ENCODE measurements at regions of chr4 and their contacts with region 1.

Region 1: GRCh38 chr4:78775303-78776030 is 683 bp upstream of the BMP2K start:
- DNase-seq: peak in 1 of 2 experiments; percentile 70
- H3K4me3 ChIP-seq: peak overlapping the region; percentile 78
- H3K27ac ChIP-seq: peak overlapping the region; percentile 74
- H3K4me1 ChIP-seq: peaks cover 14% of the 10 kb centered on the region
- H3K27me3 ChIP-seq: no peaks in the 10 kb centered on the region
- CTCF ChIP-seq: no peak

Region 2: GRCh38 chr4:78645853-78646757 is 129.4 kb before region 1 on chr4:
- CTCF ChIA-PET with region 1: no interaction called
- POLR2A ChIA-PET with region 1: no interaction called
- intact Hi-C with region 1: loop called (anchors 2 kb)
- DNase-seq: peak; percentile 45 to 78
- H3K4me3 ChIP-seq: peak overlapping the region; percentile 48; the same call in 1 of the 2 replicates
- H3K27ac ChIP-seq: peak overlapping the region; percentile 88
- H3K4me1 ChIP-seq: peaks cover 81% of the 10 kb centered on the region
- H3K27me3 ChIP-seq: no peaks in the 10 kb centered on the region
- CTCF ChIP-seq: no peak

Region 3: DNA sequence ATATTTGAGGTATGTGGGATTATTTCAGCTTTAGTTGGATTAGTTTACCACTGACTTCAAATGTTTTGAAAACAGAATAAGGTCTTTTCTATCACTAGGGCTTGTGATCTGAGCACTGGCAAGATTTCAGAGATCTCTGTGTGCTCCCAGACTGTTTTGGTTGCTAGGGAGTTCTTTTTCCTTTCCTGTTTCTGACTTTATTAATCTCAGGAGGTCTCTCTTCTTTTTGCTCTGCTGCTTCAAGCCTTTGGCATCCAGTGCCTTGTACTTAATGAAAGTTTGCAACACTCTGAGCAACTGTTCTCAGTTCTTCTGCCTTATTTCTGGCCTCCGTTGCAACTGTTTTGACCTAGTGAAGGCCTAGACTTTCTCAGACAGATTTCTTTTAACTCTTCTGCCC is 195.9 kb after region 1 on chr4:
- CTCF ChIA-PET with region 1: no interaction called
- POLR2A ChIA-PET with region 1: no interaction called
- intact Hi-C with region 1: no loop called
- DNase-seq: no peak
- H3K4me3 ChIP-seq: no peak overlapping the region
- H3K27ac ChIP-seq: no peak overlapping the region
- H3K4me1 ChIP-seq: no peaks in the 10 kb centered on the region
- H3K27me3 ChIP-seq: no peaks in the 10 kb centered on the region
- CTCF ChIP-seq: no peak

Measured in PC-9 (cell line).